ENCODE measurements at regions of chr7 and their contacts with region 1.

Region 1: DNA sequence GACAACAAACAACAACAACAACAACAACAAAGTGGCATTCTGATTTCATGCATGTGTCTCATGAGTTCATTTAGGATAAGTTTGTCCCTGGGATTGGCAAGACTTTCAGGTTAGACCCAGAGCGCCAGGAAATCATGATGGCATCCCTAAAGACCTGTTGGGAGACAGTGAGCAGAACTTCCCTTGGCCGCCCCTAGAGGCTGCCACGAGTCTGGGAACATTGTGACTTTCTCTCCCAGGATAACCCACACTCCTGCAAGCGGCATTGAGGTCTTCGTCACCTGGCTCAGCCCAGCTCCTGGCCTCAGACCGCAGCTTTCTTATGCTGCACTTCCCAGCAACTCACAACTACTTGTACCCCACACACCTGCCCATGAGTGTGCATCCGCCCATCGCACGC is 80.5 kb upstream of the RNF32 start:
- DNase-seq: peak; percentile 21 to 67
- H3K4me3 ChIP-seq: no peak overlapping the region
- H3K27ac ChIP-seq: no peak overlapping the region
- H3K4me1 ChIP-seq: peaks cover 0 to 2% (median under 1%) of the 10 kb centered on the region in 4 experiments; a peak in 3 of 7 replicates
- H3K27me3 ChIP-seq: no peaks in the 10 kb centered on the region
- CTCF ChIP-seq: peak; percentile 64 to 86 (median 73)
- EP300 ChIP-seq: no peak
- POLR2A ChIP-seq: no peak
- RAD21 ChIP-seq: peak; percentile 72 to 78

Region 2: DNA sequence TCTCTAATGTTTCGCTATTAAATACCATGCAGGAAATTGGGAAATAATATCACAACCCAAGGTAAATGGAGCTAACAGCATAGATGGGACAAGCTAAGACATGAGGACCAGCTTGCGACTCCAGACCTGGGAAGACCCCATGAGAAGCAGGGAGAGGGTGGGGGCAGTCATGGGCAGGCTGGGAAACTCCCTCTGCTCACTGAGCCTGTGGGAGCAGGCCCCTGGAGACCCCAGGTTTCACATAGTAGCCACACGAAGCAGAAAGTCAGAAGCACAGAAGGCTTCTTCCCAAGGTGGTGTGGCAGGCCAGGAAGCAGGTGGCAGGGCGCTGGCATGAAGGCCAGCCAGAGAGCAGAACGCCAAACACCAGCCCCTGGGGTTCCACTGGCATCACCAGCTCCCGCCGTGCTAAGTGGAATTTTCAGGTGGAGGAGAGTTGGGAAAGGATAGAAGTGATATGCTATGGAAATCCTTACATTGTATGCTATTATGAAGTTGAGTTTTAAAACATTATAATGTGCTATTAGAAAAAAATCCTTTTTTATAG is 19.4 kb before region 1 on chr7:
- CTCF ChIA-PET with region 1: interaction called, 10 read pairs
- POLR2A ChIA-PET with region 1: no interaction called
- DNase-seq: no peak
- H3K4me3 ChIP-seq: no peak overlapping the region
- H3K27ac ChIP-seq: no peak overlapping the region
- H3K4me1 ChIP-seq: no peaks in the 10 kb centered on the region
- H3K27me3 ChIP-seq: no peaks in the 10 kb centered on the region
- CTCF ChIP-seq: no peak
- EP300 ChIP-seq: no peak
- POLR2A ChIP-seq: no peak
- RAD21 ChIP-seq: no peak

Region 3: DNA sequence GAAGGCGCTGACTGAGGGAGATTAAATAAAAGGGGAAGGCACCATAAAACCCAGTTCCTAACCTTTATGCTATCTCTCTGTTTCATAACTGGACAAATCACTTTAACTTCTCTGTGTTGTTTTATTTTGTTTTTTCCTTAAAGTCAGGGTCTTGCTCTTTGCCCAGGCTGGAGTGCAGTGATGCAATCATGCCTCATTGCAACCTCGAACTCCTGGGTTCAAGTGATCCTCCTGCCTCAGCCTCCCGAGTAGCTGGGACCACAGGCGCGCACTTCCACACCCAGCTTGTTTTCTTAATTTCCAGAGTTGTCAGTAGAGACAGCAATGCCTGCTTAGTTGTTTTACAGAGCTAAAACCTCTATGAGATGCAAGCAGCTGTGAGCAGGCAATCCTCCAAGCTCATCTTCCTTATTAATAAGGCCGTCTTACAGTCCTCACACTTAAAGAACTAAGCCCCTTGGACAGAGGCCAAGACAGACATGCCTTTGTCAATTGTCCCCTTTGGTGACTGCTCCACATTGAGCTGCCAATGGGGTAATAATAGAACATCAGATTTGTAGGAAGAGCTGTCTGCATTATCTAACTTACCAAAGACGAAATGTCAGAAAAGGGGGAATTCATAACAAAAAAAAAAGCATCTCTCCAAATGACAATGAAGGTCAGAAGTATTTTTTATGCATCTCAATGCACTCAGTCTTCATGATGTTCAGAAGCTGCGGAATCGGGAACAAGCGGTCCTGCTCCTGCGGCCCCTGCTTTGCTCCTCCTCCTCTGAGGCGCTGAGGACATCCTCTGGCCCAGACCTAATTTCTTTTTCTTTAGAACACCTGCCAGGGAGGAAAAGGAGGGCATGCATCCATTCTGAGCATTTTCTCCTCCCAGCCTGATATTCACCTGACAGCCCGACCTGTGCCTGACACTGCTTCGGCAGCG is 17.8 kb after region 1 on chr7:
- CTCF ChIA-PET with region 1: interaction called, 20 read pairs
- POLR2A ChIA-PET with region 1: no interaction called
- DNase-seq: no peak
- H3K4me3 ChIP-seq: no peak overlapping the region
- H3K27ac ChIP-seq: no peak overlapping the region
- H3K4me1 ChIP-seq: peaks cover 0 to 18% (median 9%) of the 10 kb centered on the region in 4 experiments; a peak in 5 of 7 replicates
- H3K27me3 ChIP-seq: no peaks in the 10 kb centered on the region; a peak in 2 of 7 replicates
- CTCF ChIP-seq: no peak
- EP300 ChIP-seq: no peak
- POLR2A ChIP-seq: no peak
- RAD21 ChIP-seq: no peak

Region 4: DNA sequence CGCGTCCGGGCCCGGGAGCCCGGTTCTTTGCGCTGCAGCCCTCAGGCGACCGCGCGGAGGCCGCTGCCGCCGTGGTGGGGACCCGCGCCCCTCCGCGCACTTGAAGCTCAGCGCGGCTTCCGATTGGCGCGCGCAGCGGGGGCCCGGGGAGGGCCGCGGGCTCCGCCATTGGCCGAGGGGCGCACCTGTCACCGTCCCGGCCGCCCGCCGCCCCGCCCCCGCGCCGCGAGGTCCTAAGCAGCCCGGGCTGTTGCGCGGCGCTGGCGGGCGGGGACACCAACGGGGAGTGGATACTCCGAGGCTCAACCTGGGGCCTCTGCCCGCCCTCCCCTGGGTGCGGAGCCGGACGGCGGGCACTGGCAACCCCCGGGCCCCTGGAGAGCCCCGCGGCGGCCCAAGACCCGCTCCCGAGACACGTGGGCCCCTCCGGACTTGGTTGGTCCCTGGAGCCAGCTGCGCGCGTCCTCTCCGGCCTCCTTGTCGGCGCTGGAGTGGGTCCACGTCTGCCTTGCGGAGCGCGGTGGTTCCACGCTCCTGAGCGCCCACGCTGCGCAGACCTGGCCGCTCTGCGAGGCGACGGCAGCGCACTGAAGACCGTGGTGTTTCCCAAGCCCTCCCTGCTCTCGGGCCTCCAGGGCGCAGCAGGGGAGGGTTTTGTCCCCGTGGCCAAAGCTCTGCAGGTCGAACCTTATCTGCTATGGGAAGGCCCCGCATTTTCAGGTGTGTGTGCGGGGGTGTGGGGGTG is 450.7 kb after region 1 on chr7 and contains the start of gene MNX1:
- CTCF ChIA-PET with region 1: no interaction called
- POLR2A ChIA-PET with region 1: no interaction called
- DNase-seq: peak in 1 of 2 experiments; percentile 92
- H3K4me3 ChIP-seq: peak within 1 kb of the TSS; percentile 27 to 52 (median 36)
- H3K27ac ChIP-seq: no peak within 1 kb of the TSS
- H3K4me1 ChIP-seq: peaks cover 8 to 38% (median 17%) of the 10 kb centered on the region in 4 experiments
- H3K27me3 ChIP-seq: peaks cover 91 to 98% (median 96%) of the 10 kb centered on the region in 4 experiments
- CTCF ChIP-seq: no peak
- EP300 ChIP-seq: peak in 1 of 2 experiments; percentile 11; a peak in 1 of 3 replicates
- POLR2A ChIP-seq: no peak
- RAD21 ChIP-seq: no peak
- total RNA-seq, gene MNX1: 0.39 and 0.52 TPM in 2 replicates